ENCODE measurements at regions of chr12 and their contacts with region 1.

Region 1: GRCh38 chr12:47773062-47773857 is at the start of gene SLC48A1:
- DNase-seq: peak; percentile 61
- H3K4me3 Mint-ChIP-seq: peak within 1 kb of the TSS; percentile 74
- H3K27ac Mint-ChIP-seq: peak within 1 kb of the TSS; percentile 59
- H3K4me1 Mint-ChIP-seq: peaks cover 18% of the 10 kb centered on the region
- H3K27me3 Mint-ChIP-seq: no peaks in the 10 kb centered on the region
- CTCF ChIP-seq: no peak
- total RNA-seq, gene SLC48A1: 19.4 and 20.2 TPM in 2 replicates

Region 2: DNA sequence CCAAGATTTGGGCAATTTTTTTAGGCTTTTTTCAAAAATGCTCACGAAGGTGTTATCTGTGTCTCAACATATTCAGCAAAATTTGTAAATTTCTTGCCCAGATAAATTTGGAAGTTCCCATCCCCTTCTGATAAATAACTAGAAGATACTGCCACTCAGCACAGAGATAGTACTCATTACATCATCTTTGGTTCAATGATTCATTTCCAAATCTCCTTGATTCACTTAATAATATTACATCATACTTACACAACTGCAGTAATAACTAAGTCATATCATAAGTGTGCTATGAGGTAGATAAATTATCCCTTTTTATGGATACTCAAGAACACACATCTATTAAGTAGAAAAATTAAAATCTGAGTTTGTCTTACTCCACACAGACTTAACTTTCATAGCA is 156.8 kb before region 1 on chr12:
- CTCF ChIA-PET with region 1: no interaction called
- POLR2A ChIA-PET with region 1: no interaction called
- intact Hi-C with region 1: no loop called
- DNase-seq: no peak
- H3K4me3 Mint-ChIP-seq: no peak overlapping the region
- H3K27ac Mint-ChIP-seq: no peak overlapping the region
- H3K4me1 Mint-ChIP-seq: no peaks in the 10 kb centered on the region
- H3K27me3 Mint-ChIP-seq: no peaks in the 10 kb centered on the region
- CTCF ChIP-seq: no peak

Region 3: GRCh38 chr12:47753034-47754001 is 19.9 kb before region 1 on chr12:
- CTCF ChIA-PET with region 1: interaction called, 184 read pairs
- POLR2A ChIA-PET with region 1: interaction called, 22 read pairs
- intact Hi-C with region 1: no loop called
- DNase-seq: peak; percentile 76
- H3K4me3 Mint-ChIP-seq: peak overlapping the region; percentile 35
- H3K27ac Mint-ChIP-seq: peak overlapping the region; percentile 89
- H3K4me1 Mint-ChIP-seq: peaks cover 32% of the 10 kb centered on the region
- H3K27me3 Mint-ChIP-seq: no peaks in the 10 kb centered on the region
- CTCF ChIP-seq: no peak

Region 4: DNA sequence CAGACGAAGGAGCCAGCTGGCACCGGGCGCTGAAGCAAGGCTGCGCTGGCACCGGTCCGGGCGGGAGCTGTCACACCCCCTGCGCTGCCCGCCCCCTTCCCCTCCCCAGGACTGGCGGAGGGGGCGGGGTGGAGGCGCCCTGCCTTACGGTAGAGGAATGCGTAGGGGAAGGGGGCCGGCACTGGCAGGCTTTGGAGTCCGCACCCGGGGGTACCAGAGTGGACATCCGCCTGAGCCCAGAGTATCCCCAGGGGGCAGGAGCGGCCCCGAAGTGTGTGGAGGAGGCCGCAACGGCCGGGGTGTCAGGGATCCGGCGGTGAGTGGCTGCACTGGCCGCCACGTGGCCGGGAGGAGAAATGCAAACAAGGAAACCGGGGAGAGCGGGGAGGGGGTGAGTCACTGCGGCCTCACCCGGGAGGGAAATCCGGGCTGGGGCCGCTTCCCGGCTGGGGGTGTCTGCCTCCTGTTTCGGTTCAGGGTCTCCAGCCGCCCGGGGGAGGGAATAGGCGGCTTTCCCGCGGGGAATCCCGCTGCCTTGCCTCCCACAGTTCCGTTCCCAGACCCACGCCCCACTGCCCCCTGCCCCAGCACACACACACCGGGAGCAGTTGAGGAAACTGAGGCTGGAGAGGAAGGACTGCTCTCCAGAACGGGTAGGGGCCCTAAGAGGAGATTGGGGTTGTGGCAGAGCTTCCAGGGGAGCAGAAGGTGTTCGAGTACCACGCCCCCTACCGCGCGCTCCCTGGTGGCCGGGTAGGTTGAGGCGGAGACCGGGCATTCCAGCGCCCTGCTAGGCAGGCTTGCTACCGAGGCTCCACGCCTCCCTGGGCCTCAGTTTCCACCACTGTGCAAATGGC is 14.2 kb before region 1 on chr12 and contains the start of gene RAPGEF3:
- CTCF ChIA-PET with region 1: interaction called, 184 read pairs
- POLR2A ChIA-PET with region 1: interaction called, 22 read pairs
- intact Hi-C with region 1: no loop called
- DNase-seq: peak; percentile 89
- H3K4me3 Mint-ChIP-seq: peak within 1 kb of the TSS; percentile 74
- H3K27ac Mint-ChIP-seq: peak within 1 kb of the TSS; percentile 35
- H3K4me1 Mint-ChIP-seq: peaks cover 20% of the 10 kb centered on the region
- H3K27me3 Mint-ChIP-seq: no peaks in the 10 kb centered on the region
- CTCF ChIP-seq: peak; percentile 60
- total RNA-seq, gene RAPGEF3: 1.4 and 3.4 TPM in 2 replicates